ENCODE measurements at regions of chr3 and their contacts with region 1.

Region 1: DNA sequence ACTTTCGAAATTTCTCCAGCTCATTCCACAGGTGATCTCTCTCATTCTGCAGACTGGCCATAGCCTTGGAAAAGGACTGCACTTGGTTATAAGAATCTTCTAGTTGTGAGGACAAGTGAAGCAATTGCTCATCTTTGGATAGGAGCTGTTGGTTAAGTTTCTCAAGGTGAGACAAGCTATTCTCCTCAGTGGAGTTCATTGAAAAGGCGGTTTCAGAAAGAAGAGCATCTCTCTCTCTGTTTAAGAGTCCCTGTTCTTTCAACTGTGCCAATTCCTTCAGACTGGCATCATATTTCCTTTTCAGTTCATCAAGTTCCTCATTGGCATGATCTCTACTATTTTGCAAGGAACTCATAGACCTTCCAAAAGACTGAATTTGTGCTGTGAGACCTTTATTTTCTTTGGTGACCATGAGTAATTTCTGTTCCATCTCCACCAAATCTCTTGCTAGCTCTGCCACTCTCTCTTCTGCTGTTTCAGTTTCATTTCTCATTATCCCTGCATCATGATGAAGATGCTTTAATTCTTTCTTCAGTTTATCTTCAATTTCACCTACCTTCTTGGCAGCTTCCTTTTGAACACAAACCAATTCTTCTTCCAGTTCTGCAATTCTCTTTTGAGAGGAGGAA is 30.2 kb upstream of the HCLS1 start:
- DNase-seq: peak; percentile 1
- H3K4me3 Mint-ChIP-seq: peak overlapping the region; percentile 61
- H3K27ac Mint-ChIP-seq: peak overlapping the region; percentile 73
- H3K4me1 Mint-ChIP-seq: peaks cover 20% of the 10 kb centered on the region
- H3K27me3 Mint-ChIP-seq: no peaks in the 10 kb centered on the region

Region 2: GRCh38 chr3:121724130-121724529 is 33.2 kb after region 1 on chr3:
- intact Hi-C with region 1: no loop called
- DNase-seq: no peak
- H3K4me3 Mint-ChIP-seq: no peak overlapping the region
- H3K27ac Mint-ChIP-seq: no peak overlapping the region
- H3K4me1 Mint-ChIP-seq: no peaks in the 10 kb centered on the region
- H3K27me3 Mint-ChIP-seq: no peaks in the 10 kb centered on the region

Region 3: DNA sequence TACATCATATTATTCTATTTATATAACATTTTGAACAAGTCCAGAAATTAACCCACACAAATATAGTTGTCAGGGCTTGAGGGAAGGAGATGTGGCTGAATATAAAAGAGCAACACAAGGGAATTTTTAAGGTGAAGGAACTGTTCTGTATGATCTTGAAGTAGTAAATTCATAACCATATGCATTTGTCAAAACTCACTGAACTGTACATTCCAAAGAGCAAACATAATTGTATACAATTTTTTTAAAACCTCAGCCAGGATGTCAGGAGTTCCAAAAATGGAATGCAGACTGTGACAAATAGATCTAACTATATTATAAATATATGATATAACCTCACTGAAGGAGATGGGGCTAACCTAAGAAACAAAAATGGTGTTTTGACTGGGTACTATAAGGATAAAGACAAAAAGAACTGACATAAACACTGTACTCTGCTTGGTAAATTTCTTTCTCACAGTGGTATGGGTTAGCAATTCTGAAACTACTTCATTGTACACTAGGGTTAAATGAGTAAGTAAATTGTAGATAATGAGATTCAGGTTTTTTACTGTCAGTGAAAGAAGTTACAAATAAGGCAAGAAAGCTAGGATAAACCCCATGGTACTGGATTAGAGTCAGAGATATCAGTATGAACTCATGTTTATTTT is 44.3 kb after region 1 on chr3:
- intact Hi-C with region 1: loop called (anchors 5 kb)
- DNase-seq: no peak
- H3K4me3 Mint-ChIP-seq: no peak overlapping the region
- H3K27ac Mint-ChIP-seq: peak overlapping the region; percentile 36
- H3K4me1 Mint-ChIP-seq: peaks cover 41% of the 10 kb centered on the region
- H3K27me3 Mint-ChIP-seq: no peaks in the 10 kb centered on the region